ENCODE measurements at regions of chr11 and their contacts with region 1.

Region 1: DNA sequence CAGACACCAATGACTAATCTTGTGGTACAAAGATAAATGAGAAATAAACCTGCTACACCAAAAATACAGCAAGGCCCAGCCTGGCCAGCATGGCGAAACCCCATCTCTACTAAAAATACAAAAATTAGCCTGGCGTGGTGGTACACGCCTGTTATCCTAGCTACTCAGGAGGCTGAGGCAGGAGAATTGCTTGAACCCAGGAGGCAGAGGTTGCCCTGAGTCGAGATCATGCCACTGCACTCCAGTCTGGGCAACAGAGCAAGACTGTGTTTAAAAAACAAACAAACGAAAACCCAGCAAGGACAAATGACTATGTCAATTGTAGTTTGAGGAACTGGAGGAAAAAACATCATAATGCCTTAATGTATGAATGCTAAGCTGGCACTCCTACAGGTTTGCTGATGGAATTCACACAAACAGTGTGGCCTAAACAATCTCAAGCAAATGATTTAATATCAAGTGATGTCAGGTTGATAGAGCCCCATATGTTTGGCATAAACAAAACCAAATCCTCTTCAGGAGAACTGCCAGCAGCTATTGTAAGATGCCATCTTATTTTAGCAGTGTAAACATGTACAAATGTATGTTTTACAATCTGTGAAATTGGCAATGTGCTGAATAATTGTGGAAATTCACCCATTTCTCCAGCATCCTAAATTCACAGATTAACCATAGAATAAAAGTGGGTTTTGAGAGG is 20.0 kb downstream of the MMP7 start:
- DNase-seq: no peak
- ATAC-seq: peak; percentile 70
- H3K4me3 ChIP-seq: no peak overlapping the region
- H3K27ac ChIP-seq: peak overlapping the region; percentile 52; the same call in 1 of the 2 replicates
- H3K4me1 ChIP-seq: peaks cover 10% of the 10 kb centered on the region
- H3K27me3 ChIP-seq: no peaks in the 10 kb centered on the region
- CTCF ChIP-seq: no peak

Region 2: DNA sequence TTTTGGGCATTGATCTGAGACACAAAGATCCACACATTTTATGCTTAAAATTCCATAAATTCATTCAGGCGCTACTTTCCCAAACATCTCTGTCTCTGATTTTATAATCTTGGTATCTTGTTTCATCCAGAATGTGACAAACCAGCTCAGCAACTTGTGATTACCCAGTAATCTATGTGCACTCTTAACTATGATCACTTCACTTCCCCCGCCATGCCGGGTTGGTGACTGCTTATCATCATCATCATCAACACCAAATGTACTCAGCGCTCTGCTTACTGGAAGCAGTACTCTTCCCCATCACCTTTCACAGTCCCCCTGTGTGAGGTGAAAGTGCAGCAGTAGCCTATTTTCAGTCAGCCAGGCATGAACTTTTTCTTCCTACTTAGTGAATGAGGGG is 35.1 kb after region 1 on chr11:
- CTCF ChIA-PET with region 1: interaction called, 12 read pairs
- POLR2A ChIA-PET with region 1: no interaction called
- in situ Hi-C with region 1: no loop called
- intact Hi-C with region 1: no loop called
- DNase-seq: no peak
- ATAC-seq: no peak
- H3K4me3 ChIP-seq: no peak overlapping the region
- H3K27ac ChIP-seq: peak overlapping the region; percentile 37; the same call in 1 of the 2 replicates
- H3K4me1 ChIP-seq: peaks cover 3% of the 10 kb centered on the region
- H3K27me3 ChIP-seq: no peaks in the 10 kb centered on the region
- CTCF ChIP-seq: no peak